B cell (primary cell): ENCODE measurements at regions of chr17 and their contacts with region 1.

Region 1: GRCh38 chr17:27601069-27601975 is 29.7 kb upstream of the LGALS9 start:
- DNase-seq: peak; percentile 86
- ATAC-seq: peak; percentile 68
- H3K4me3 ChIP-seq: no peak overlapping the region
- H3K4me3 Mint-ChIP-seq: no peak overlapping the region
- H3K27ac ChIP-seq: no peak overlapping the region
- H3K27ac Mint-ChIP-seq: no peak overlapping the region
- H3K4me1 ChIP-seq: peaks cover 0 to 4% of the 10 kb centered on the region in 2 donors
- H3K4me1 Mint-ChIP-seq: peaks cover 2% of the 10 kb centered on the region
- H3K27me3 ChIP-seq: no peaks in the 10 kb centered on the region
- H3K27me3 Mint-ChIP-seq: no peaks in the 10 kb centered on the region
- CTCF ChIP-seq: peak; percentile 95

Region 2: GRCh38 chr17:27236717-27237315 is 364.5 kb before region 1 on chr17:
- CTCF ChIA-PET with region 1: interaction called, 322 read pairs
- POLR2A ChIA-PET with region 1: no interaction called
- intact Hi-C with region 1: loop called (anchors 1 kb)
- DNase-seq: peak; percentile 81
- ATAC-seq: peak; percentile 78
- H3K4me3 ChIP-seq: no peak overlapping the region
- H3K4me3 Mint-ChIP-seq: no peak overlapping the region
- H3K27ac ChIP-seq: no peak overlapping the region
- H3K27ac Mint-ChIP-seq: no peak overlapping the region
- H3K4me1 ChIP-seq: peaks cover 11 to 22% of the 10 kb centered on the region in 2 donors
- H3K4me1 Mint-ChIP-seq: peaks cover 34% of the 10 kb centered on the region
- H3K27me3 ChIP-seq: no peaks in the 10 kb centered on the region
- H3K27me3 Mint-ChIP-seq: no peaks in the 10 kb centered on the region
- CTCF ChIP-seq: peak; percentile 99

Region 3: DNA sequence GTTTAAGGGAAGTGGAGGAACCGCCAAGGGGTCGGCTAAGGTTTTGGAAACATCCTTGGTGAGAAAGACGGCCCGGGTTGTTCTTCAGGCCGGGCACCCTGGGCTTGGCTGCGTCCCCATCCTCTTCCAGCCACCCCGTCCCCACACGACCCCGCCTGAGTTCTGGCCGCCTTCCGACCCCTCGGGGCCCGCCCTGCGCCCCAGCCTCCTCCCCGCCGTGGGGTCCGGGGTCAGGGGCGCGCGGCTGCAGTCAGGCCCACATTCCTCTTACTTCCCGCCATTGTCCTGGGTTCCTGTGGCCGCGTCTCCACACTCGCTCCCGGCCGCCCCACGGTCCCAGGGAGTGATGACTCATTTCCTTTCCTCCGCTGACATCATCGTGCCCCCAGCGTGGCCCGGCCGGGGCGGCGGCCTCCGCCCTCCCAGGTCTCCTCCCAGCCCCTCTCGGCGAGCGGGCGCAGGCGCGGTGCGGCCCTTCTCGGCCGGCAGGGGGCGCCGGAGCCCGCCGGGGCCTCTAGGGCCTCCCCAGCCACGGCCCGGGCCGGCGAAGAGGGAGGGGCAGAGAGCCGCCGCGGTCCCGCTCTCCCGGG is 247.8 kb before region 1 on chr17:
- CTCF ChIA-PET with region 1: interaction called, 170 read pairs
- POLR2A ChIA-PET with region 1: no interaction called
- intact Hi-C with region 1: loop called (anchors 1 kb)
- DNase-seq: peak; percentile 90
- ATAC-seq: peak; percentile 82
- H3K4me3 ChIP-seq: peak overlapping the region in 4 of 5 experiments; percentile 62 to 78 (median 72)
- H3K4me3 Mint-ChIP-seq: peak overlapping the region; percentile 73
- H3K27ac ChIP-seq: peak overlapping the region; percentile 60 to 89
- H3K27ac Mint-ChIP-seq: peak overlapping the region; percentile 91
- H3K4me1 ChIP-seq: peaks cover 13 to 19% of the 10 kb centered on the region in 2 donors
- H3K4me1 Mint-ChIP-seq: peaks cover 19% of the 10 kb centered on the region
- H3K27me3 ChIP-seq: no peaks in the 10 kb centered on the region
- H3K27me3 Mint-ChIP-seq: no peaks in the 10 kb centered on the region
- CTCF ChIP-seq: peak; percentile 90

Region 4: GRCh38 chr17:27455914-27456680 is 145.2 kb before region 1 on chr17 and contains the start of gene KSR1:
- CTCF ChIA-PET with region 1: interaction called, 140 read pairs
- POLR2A ChIA-PET with region 1: interaction called, 16 read pairs
- intact Hi-C with region 1: loop called (anchors 1 kb)
- DNase-seq: peak; percentile 89
- ATAC-seq: peak; percentile 94
- H3K4me3 ChIP-seq: peak within 1 kb of the TSS; percentile 21 to 76 (median 66)
- H3K4me3 Mint-ChIP-seq: peak within 1 kb of the TSS; percentile 94
- H3K27ac ChIP-seq: peak within 1 kb of the TSS in 1 of 2 donors; percentile 62
- H3K27ac Mint-ChIP-seq: peak within 1 kb of the TSS; percentile 88
- H3K4me1 ChIP-seq: peaks cover 16 to 23% of the 10 kb centered on the region in 2 donors
- H3K4me1 Mint-ChIP-seq: peaks cover 21% of the 10 kb centered on the region
- H3K27me3 ChIP-seq: no peaks in the 10 kb centered on the region
- H3K27me3 Mint-ChIP-seq: no peaks in the 10 kb centered on the region
- CTCF ChIP-seq: peak; percentile 29
- total RNA-seq, gene KSR1: 78.1 and 85.6 TPM in 2 replicates

Region 5: GRCh38 chr17:27569257-27569722 is 32.0 kb before region 1 on chr17:
- CTCF ChIA-PET with region 1: interaction called, 21 read pairs
- POLR2A ChIA-PET with region 1: no interaction called
- intact Hi-C with region 1: no loop called
- DNase-seq: peak; percentile 40
- ATAC-seq: peak; percentile 61
- H3K4me3 ChIP-seq: no peak overlapping the region
- H3K4me3 Mint-ChIP-seq: no peak overlapping the region
- H3K27ac ChIP-seq: no peak overlapping the region
- H3K27ac Mint-ChIP-seq: no peak overlapping the region
- H3K4me1 ChIP-seq: no peaks in the 10 kb centered on the region
- H3K4me1 Mint-ChIP-seq: no peaks in the 10 kb centered on the region
- H3K27me3 ChIP-seq: no peaks in the 10 kb centered on the region
- H3K27me3 Mint-ChIP-seq: no peaks in the 10 kb centered on the region
- CTCF ChIP-seq: peak; percentile 46

Region 6: GRCh38 chr17:27630607-27631410 is 29.5 kb after region 1 on chr17 and contains the start of gene LGALS9:
- CTCF ChIA-PET with region 1: interaction called, 59 read pairs
- POLR2A ChIA-PET with region 1: interaction called, 5 read pairs
- intact Hi-C with region 1: no loop called
- DNase-seq: peak; percentile 63
- ATAC-seq: peak; percentile 57
- H3K4me3 ChIP-seq: peak within 1 kb of the TSS; percentile 53 to 98 (median 78)
- H3K4me3 Mint-ChIP-seq: peak within 1 kb of the TSS; percentile 88
- H3K27ac ChIP-seq: peak within 1 kb of the TSS; percentile 77 to 83
- H3K27ac Mint-ChIP-seq: peak within 1 kb of the TSS; percentile 93
- H3K4me1 ChIP-seq: peaks cover 37 to 53% of the 10 kb centered on the region in 2 donors
- H3K4me1 Mint-ChIP-seq: peaks cover 50% of the 10 kb centered on the region
- H3K27me3 ChIP-seq: no peaks in the 10 kb centered on the region
- H3K27me3 Mint-ChIP-seq: no peaks in the 10 kb centered on the region
- CTCF ChIP-seq: no peak
- total RNA-seq, gene LGALS9: 65.9 and 68.1 TPM in 2 replicates